ENCODE measurements at regions of chr21 and their contacts with region 1.

Region 1: GRCh38 chr21:34073032-34073869 is at the starts of genes MRPS6 and SLC5A3:
- DNase-seq: peak; percentile 67 to 89
- H3K4me3 ChIP-seq: peak within 1 kb of the TSS; percentile 77 to 84
- H3K27ac ChIP-seq: peak within 1 kb of the TSS; percentile 87 to 92
- H3K4me1 ChIP-seq: peaks cover 0 to 49% (median 13%) of the 10 kb centered on the region in 4 donors
- H3K27me3 ChIP-seq: no peaks in the 10 kb centered on the region
- CTCF ChIP-seq: peak in 1 of 2 experiments; percentile 30

Region 2: DNA sequence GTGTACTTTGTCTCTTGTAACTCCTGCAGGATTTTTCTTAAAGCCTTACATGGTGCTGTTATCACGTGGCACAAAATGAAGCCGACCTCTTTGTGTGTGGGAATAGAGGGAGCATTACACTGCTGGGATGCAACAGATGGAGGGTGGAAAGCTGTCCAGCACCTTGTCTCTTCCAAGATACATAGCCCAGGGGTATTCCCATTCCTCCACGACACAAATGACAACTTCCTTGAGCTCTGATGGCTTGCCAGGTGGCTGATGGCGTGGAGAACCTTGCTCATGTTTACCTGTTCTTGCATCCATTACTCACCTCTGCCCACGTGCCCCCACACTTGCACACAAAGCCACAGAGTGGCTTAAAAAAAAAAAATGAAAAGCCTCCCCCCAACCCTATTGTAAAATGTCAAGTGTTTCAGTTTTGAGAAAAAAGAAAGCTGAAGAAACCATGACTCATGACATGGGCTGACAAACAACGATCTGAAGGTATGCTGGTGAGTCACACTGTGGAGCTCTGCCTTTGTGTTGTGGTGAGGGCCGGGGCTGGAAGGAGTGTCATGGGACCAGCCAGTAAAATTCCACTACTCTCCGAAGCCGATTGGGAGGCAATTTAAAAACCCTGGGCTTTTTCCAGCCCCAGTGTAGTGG is 125.7 kb before region 1 on chr21:
- intact Hi-C with region 1: loop called (anchors 10 kb)
- DNase-seq: peak; percentile 89
- H3K4me3 ChIP-seq: peak overlapping the region; percentile 26 to 37
- H3K27ac ChIP-seq: peak overlapping the region; percentile 67 to 72
- H3K4me1 ChIP-seq: peaks cover 0 to 20% (median 18%) of the 10 kb centered on the region in 4 donors
- H3K27me3 ChIP-seq: no peaks in the 10 kb centered on the region
- CTCF ChIP-seq: no peak

Region 3: GRCh38 chr21:34113842-34114241 is 40.6 kb after region 1 on chr21:
- intact Hi-C with region 1: no loop called
- DNase-seq: no peak
- H3K4me3 ChIP-seq: no peak overlapping the region
- H3K27ac ChIP-seq: no peak overlapping the region
- H3K4me1 ChIP-seq: peaks cover 0 to 48% (median 4%) of the 10 kb centered on the region in 4 donors
- H3K27me3 ChIP-seq: no peaks in the 10 kb centered on the region
- CTCF ChIP-seq: no peak

Region 4: DNA sequence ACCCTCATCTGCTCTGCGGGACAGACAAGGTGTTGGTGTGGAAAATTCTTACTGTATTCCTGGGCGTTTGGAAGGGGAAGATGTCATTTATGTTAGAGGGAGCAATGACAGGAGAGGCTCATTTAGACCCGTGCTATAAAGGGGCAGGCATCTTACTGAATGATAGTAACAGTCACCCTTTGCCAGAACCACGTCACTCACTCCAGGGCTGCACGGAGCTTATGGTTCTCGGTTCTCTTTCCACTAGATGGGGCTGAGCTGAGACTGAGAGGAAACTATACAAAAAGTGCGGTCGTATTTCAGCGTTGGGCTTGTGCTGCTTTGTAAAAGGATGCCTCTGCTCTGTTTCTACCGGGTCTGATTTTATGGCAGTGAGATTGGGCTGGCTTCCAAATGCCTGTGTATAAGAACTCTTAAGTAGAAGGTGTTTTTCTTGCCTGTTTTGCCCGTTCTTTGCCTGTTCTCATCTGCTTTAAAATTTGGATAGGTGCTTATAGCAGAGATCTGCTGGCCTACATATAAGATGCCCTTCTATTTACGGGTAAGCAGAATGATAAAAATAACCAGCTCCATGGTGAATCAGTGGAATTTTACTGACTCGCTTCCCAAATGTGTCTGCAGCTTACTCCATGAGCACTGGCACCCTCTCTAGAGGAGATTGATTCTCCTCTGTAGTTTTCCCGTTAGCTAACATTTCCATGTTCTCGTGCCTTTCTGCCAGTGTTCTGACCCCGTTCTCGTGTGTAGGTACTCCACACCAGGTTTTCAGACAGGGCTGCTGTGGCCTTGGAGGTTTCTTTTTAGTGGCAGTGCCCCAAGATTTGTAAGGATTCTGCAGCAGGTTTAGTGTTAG is 56.0 kb after region 1 on chr21:
- intact Hi-C with region 1: loop called (anchors 5 kb)
- DNase-seq: peak; percentile 69 to 87
- H3K4me3 ChIP-seq: peak overlapping the region; percentile 20 to 34
- H3K27ac ChIP-seq: peak overlapping the region; percentile 63 to 77
- H3K4me1 ChIP-seq: peaks cover 4 to 99% (median 70%) of the 10 kb centered on the region in 4 donors
- H3K27me3 ChIP-seq: no peaks in the 10 kb centered on the region
- CTCF ChIP-seq: peak; percentile 37 to 41

Region 5: DNA sequence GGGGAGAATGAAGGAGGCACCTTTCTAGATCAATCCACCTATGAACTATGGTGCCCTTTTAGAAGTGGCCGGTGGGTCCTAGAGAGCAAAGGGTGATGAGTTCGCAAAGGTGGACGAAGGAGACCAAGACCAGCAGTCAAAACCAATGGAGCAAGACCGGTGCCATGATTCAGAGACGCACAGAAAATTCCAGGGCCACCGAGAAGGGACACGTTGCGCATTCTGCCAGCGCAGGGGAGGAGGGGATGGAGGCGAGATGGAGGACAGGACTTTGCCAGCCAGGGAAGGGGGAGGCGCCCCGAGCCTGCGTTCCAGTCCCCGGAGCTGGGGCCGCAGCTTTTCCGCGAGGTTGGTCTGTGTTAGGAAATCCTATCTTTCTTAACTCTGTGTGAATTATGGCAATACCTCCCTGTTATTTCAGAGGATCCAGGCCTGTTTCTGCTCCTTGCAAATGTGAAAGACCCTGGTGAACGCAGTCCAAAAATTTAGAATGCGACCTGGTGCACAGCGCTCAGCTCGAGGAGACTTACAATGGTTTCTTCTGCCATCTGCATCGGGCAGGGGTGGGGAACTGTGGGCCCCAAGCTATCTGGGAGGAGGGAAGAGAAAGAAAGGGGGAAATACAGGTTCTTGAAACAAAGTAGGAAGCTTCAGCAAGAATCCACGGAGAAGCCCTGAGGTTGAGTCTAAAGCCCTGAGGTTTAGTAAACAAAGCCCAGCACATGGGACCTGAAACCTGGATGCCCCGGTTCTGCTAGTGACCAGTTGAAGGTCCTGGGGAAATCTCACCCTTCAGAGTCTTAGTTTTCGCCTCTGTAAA is 129.5 kb after region 1 on chr21:
- intact Hi-C with region 1: loop called (anchors 5 kb)
- DNase-seq: peak; percentile 48 to 86
- H3K4me3 ChIP-seq: peak overlapping the region; percentile 49 to 60
- H3K27ac ChIP-seq: peak overlapping the region; percentile 71 to 78
- H3K4me1 ChIP-seq: peaks cover 0 to 65% (median 25%) of the 10 kb centered on the region in 4 donors
- H3K27me3 ChIP-seq: no peaks in the 10 kb centered on the region
- CTCF ChIP-seq: no peak

Region 6: GRCh38 chr21:34345091-34345871 is 272.0 kb after region 1 on chr21:
- intact Hi-C with region 1: loop called (anchors 5 kb)
- DNase-seq: no peak
- H3K4me3 ChIP-seq: no peak overlapping the region
- H3K27ac ChIP-seq: peak overlapping the region; percentile 77 to 83
- H3K4me1 ChIP-seq: peaks cover 0 to 52% (median 35%) of the 10 kb centered on the region in 4 donors
- H3K27me3 ChIP-seq: no peaks in the 10 kb centered on the region
- CTCF ChIP-seq: no peak